Ovary (tissue), 10 donors: ENCODE measurements at regions of chr11 and their contacts with region 1.

Region 1: GRCh38 chr11:65613929-65614674 is at the start of gene MAP3K11:
- DNase-seq: peak; percentile 91 to 95 (median 94)
- H3K4me3 ChIP-seq: peak within 1 kb of the TSS; percentile 75
- H3K27ac ChIP-seq: peak within 1 kb of the TSS; percentile 75 to 97
- H3K4me1 ChIP-seq: peaks cover 19% of the 10 kb centered on the region
- H3K27me3 ChIP-seq: no peaks in the 10 kb centered on the region
- CTCF ChIP-seq: no peak
- EP300 ChIP-seq: peak; percentile 28
- POLR2A ChIP-seq: peak; percentile 87
- total RNA-seq, gene MAP3K11: 23.2 to 51.9 (median 46.0) TPM

Region 2: GRCh38 chr11:65354265-65355012 is 259.7 kb before region 1 on chr11 and contains the start of gene TIGD3:
- intact Hi-C with region 1: no loop called
- DNase-seq: peak; percentile 98 to 99 (median 98)
- H3K4me3 ChIP-seq: peak within 1 kb of the TSS; percentile 63
- H3K27ac ChIP-seq: peak within 1 kb of the TSS in 1 of 2 donors; percentile 60
- H3K4me1 ChIP-seq: peaks cover 15% of the 10 kb centered on the region
- H3K27me3 ChIP-seq: no peaks in the 10 kb centered on the region
- CTCF ChIP-seq: no peak
- EP300 ChIP-seq: no peak
- POLR2A ChIP-seq: peak; percentile 62
- total RNA-seq, gene TIGD3: 0.11 to 0.72 (median 0.34) TPM in 6 of 7 donors, not detected in the other

Region 3: GRCh38 chr11:65540297-65541092 is 73.6 kb before region 1 on chr11:
- intact Hi-C with region 1: loop called in 1 of 4 experiments (anchors 5 kb)
- DNase-seq: peak; percentile 89 to 96 (median 93)
- H3K4me3 ChIP-seq: peak overlapping the region; percentile 51
- H3K27ac ChIP-seq: peak overlapping the region; percentile 84 to 86
- H3K4me1 ChIP-seq: peaks cover 8% of the 10 kb centered on the region
- H3K27me3 ChIP-seq: no peaks in the 10 kb centered on the region
- CTCF ChIP-seq: peak; percentile 71 to 97 (median 92)
- EP300 ChIP-seq: peak; percentile 50
- POLR2A ChIP-seq: peak; percentile 21

Region 4: DNA sequence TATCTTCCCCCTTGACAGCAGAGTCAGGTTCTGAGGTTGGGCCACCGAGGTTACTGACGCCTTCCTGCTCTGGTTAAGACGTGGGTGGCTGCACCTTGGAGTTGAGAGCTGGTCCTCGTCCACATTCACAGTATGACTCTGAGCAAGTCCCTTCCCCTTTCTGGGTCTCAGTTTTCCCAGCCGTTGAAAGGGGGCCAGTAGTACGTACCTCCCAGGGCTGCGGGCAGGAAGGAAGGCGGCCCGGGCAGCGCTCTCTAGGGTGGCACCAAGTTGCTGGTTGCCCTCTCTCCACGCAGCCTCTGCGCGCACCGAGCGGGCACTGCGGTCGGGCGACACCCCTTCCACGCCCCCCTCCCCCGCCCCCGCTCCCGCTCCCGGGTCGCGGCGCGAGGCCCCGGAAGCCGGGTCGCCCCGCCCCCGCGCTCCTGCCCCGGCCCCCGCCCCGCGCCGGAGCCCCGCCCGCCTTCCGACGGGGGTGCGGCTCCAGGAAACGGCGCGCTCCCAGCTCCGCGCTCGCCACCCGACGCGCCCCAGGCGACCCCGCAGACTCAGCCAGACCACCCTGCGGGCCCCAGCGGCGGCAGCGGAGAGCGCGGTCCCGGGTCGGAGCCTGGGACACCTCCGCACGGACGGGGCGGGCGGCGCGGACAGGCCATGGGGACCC is 38.4 kb before region 1 on chr11 and contains the start of gene EHBP1L1:
- intact Hi-C with region 1: loop called in 2 of 4 experiments (anchors 5 kb)
- DNase-seq: peak; percentile 61 to 78 (median 72)
- H3K4me3 ChIP-seq: peak within 1 kb of the TSS; percentile 69
- H3K27ac ChIP-seq: peak within 1 kb of the TSS; percentile 83 to 85
- H3K4me1 ChIP-seq: peaks cover 17% of the 10 kb centered on the region
- H3K27me3 ChIP-seq: no peaks in the 10 kb centered on the region
- CTCF ChIP-seq: no peak
- EP300 ChIP-seq: no peak
- POLR2A ChIP-seq: no peak
- total RNA-seq, gene EHBP1L1: 21.7 to 63.0 (median 40.3) TPM